Caco-2 (cell line): ENCODE measurements at regions of chr1 and their contacts with region 1.

Region 1: GRCh38 chr1:112700290-112701226 is 6.4 kb downstream of the RHOC start:
- DNase-seq: peak; percentile 57 to 79
- H3K4me3 ChIP-seq: no peak overlapping the region
- H3K4me3 Mint-ChIP-seq: no peak overlapping the region
- H3K27ac Mint-ChIP-seq: peak overlapping the region; percentile 72
- H3K4me1 ChIP-seq: peaks cover 61% of the 10 kb centered on the region
- H3K4me1 Mint-ChIP-seq: peaks cover 27% of the 10 kb centered on the region
- H3K27me3 ChIP-seq: no peaks in the 10 kb centered on the region
- H3K27me3 Mint-ChIP-seq: no peaks in the 10 kb centered on the region
- CTCF ChIP-seq: no peak

Region 2: DNA sequence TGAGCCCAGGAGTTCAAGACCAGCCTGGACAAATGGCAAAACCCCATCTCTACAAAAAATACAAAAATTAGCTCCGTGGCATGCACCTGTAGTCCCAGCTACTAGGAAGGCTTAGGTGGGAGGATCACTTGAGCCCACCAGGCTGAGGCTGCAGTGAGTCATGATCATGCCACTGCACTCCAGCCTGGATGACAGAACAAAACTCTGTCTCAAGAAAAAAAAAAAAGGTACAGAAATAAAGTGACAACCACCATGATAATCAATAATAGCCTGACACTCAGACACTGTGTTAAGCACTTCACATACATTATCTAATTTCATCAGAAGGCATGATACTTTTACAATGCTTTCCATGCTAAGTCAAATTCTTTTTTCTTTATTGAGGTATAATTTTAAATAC is 134.8 kb before region 1 on chr1:
- CTCF ChIA-PET with region 1: no interaction called
- POLR2A ChIA-PET with region 1: no interaction called
- intact Hi-C with region 1: no loop called
- DNase-seq: no peak
- H3K4me3 ChIP-seq: no peak overlapping the region
- H3K4me3 Mint-ChIP-seq: no peak overlapping the region
- H3K27ac Mint-ChIP-seq: no peak overlapping the region
- H3K4me1 ChIP-seq: no peaks in the 10 kb centered on the region
- H3K4me1 Mint-ChIP-seq: no peaks in the 10 kb centered on the region
- H3K27me3 ChIP-seq: no peaks in the 10 kb centered on the region
- H3K27me3 Mint-ChIP-seq: no peaks in the 10 kb centered on the region
- CTCF ChIP-seq: no peak

Region 3: GRCh38 chr1:112674439-112674985 is 26.0 kb before region 1 on chr1 and contains the start of gene MOV10:
- CTCF ChIA-PET with region 1: interaction called, 24 read pairs
- POLR2A ChIA-PET with region 1: interaction called, 27 read pairs
- intact Hi-C with region 1: loop called (anchors 2 kb)
- DNase-seq: peak; percentile 68 to 75
- H3K4me3 ChIP-seq: peak within 1 kb of the TSS; percentile 53
- H3K4me3 Mint-ChIP-seq: peak within 1 kb of the TSS; percentile 88
- H3K27ac Mint-ChIP-seq: peak within 1 kb of the TSS; percentile 98
- H3K4me1 ChIP-seq: peaks cover 14% of the 10 kb centered on the region
- H3K4me1 Mint-ChIP-seq: peaks cover 13% of the 10 kb centered on the region
- H3K27me3 ChIP-seq: no peaks in the 10 kb centered on the region
- H3K27me3 Mint-ChIP-seq: no peaks in the 10 kb centered on the region
- CTCF ChIP-seq: no peak
- total RNA-seq, gene MOV10: 89.8 and 102 TPM in 2 replicates